ENCODE measurements at regions of chr15 and their contacts with region 1.

Region 1: GRCh38 chr15:97759363-97759762 is 201.1 kb upstream of the ARRDC4 start:
- DNase-seq: no peak
- ATAC-seq: no peak
- H3K4me3 ChIP-seq: no peak overlapping the region
- H3K27ac ChIP-seq: no peak overlapping the region
- H3K4me1 ChIP-seq: no peaks in the 10 kb centered on the region
- H3K27me3 ChIP-seq: peaks cover 0 to 9% (median 0%) of the 10 kb centered on the region in 9 donors
- CTCF ChIP-seq: no peak
- POLR2A ChIP-seq: no peak

Region 2: GRCh38 chr15:96002890-96003859 is 1756.2 kb before region 1 on chr15:
- intact Hi-C with region 1: loop called in 1 of 10 experiments (anchors 10 kb)
- DNase-seq: no peak
- ATAC-seq: no peak
- H3K4me3 ChIP-seq: no peak overlapping the region
- H3K27ac ChIP-seq: no peak overlapping the region
- H3K4me1 ChIP-seq: no peaks in the 10 kb centered on the region
- H3K27me3 ChIP-seq: no peaks in the 10 kb centered on the region
- CTCF ChIP-seq: no peak
- POLR2A ChIP-seq: no peak

Region 3: DNA sequence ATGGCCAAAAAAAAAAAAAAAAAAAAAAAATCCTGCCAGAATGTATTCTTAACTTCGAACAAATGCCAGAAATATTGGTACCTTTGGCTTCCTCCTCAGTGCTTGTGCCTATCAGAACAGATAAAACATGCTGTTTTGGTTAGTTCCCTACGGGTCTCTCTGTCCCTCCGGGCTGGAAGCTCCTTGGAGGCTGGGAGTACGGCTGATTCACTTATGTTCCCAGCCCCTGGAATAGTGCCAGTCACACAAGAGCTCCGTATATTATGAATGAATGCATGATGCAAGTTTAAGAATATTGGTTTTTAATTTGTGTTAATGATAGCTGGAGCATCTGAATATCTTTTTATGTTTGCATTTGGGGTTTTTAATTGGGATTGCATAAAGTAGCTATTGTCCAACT is 1384.9 kb before region 1 on chr15:
- intact Hi-C with region 1: loop called in 1 of 10 experiments (anchors 10 kb)
- DNase-seq: no peak
- ATAC-seq: no peak
- H3K4me3 ChIP-seq: no peak overlapping the region
- H3K27ac ChIP-seq: no peak overlapping the region
- H3K4me1 ChIP-seq: no peaks in the 10 kb centered on the region
- H3K27me3 ChIP-seq: peaks cover 0 to 16% (median 8%) of the 10 kb centered on the region in 9 donors
- CTCF ChIP-seq: no peak
- POLR2A ChIP-seq: no peak